ENCODE measurements at regions of chr10 and their contacts with region 1.

Region 1: GRCh38 chr10:102132563-102133372 is at the start of gene PPRC1:
- DNase-seq: peak; percentile 97 to 99 (median 97)
- H3K4me3 ChIP-seq: peak within 1 kb of the TSS; percentile 55 to 61
- H3K4me3 Mint-ChIP-seq: peak within 1 kb of the TSS; percentile 92 to 99 (median 96)
- H3K27ac ChIP-seq: peak within 1 kb of the TSS; percentile 88
- H3K27ac Mint-ChIP-seq: peak within 1 kb of the TSS; percentile 93 to 99 (median 96)
- H3K4me1 ChIP-seq: peaks cover 38% of the 10 kb centered on the region
- H3K4me1 Mint-ChIP-seq: peaks cover 27 to 50% (median 38%) of the 10 kb centered on the region in 4 donors
- H3K27me3 ChIP-seq: no peaks in the 10 kb centered on the region
- H3K27me3 Mint-ChIP-seq: no peaks in the 10 kb centered on the region
- total RNA-seq, gene PPRC1: 38.9 to 39.8 TPM

Region 2: GRCh38 chr10:102064868-102065560 is 67.8 kb before region 1 on chr10 and contains the start of gene HPS6:
- CTCF ChIA-PET with region 1: no interaction called
- POLR2A ChIA-PET with region 1: no interaction called
- intact Hi-C with region 1: loop called (anchors 1 kb)
- DNase-seq: peak; percentile 86 to 90 (median 88)
- H3K4me3 ChIP-seq: peak within 1 kb of the TSS; percentile 49 to 57
- H3K4me3 Mint-ChIP-seq: peak within 1 kb of the TSS; percentile 87 to 92 (median 88)
- H3K27ac ChIP-seq: peak within 1 kb of the TSS; percentile 90
- H3K27ac Mint-ChIP-seq: peak within 1 kb of the TSS; percentile 92 to 99 (median 96)
- H3K4me1 ChIP-seq: peaks cover 42% of the 10 kb centered on the region
- H3K4me1 Mint-ChIP-seq: peaks cover 19 to 39% (median 29%) of the 10 kb centered on the region in 4 donors
- H3K27me3 ChIP-seq: no peaks in the 10 kb centered on the region
- H3K27me3 Mint-ChIP-seq: no peaks in the 10 kb centered on the region
- total RNA-seq, gene HPS6: 25.1 to 27.9 TPM

Region 3: DNA sequence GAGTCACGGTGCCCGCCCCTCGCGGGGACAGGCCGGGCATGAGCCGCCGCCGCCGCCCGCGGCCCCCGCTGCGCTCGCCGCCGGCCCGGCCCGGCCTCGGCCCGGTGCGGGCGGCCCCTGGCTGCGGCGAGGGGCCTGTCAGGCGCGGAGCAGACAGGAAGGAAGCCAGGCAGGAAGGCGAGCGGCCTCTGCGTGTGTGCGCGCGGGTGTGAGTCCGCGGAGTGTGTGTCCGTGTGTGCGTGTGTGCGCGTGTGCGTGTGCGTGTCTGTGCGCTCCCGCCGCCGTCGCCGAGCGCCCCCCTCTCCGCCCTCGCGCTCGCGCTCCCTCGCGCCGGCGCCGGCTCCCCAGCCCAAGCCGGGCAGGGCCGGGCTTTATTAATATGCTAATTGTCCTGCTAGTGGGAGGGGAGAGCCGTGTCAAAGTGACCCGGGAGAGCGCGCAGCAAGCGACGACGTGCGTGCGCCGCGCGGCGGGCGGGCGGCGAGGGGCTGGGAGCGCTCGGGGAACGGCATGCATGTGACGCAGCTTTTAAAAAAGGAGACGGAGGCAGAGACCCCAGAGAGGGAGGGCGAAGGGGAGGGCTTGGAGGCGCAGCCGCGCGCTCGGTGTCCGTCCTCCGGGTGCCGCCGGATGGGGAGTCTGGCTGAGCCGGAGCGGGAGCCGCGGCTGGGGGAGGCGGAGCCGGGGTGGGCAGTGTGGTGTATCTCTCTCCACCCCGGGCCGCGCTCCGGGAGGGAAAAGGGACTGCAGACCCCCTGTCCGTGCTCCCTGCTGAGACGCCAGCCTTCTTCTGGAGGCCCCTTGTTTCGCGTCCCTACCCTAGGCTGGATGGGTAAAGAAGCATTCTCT is 12.4 kb before region 1 on chr10 and contains the start of gene LDB1:
- CTCF ChIA-PET with region 1: interaction called, 11 read pairs
- POLR2A ChIA-PET with region 1: interaction called, 24 read pairs
- intact Hi-C with region 1: loop called (anchors 1 kb)
- DNase-seq: peak; percentile 72 to 81 (median 77)
- H3K4me3 ChIP-seq: peak within 1 kb of the TSS; percentile 78 to 86
- H3K4me3 Mint-ChIP-seq: peak within 1 kb of the TSS; percentile 91 to 95 (median 94)
- H3K27ac ChIP-seq: peak within 1 kb of the TSS; percentile 90
- H3K27ac Mint-ChIP-seq: peak within 1 kb of the TSS; percentile 92 to 98 (median 96)
- H3K4me1 ChIP-seq: peaks cover 49% of the 10 kb centered on the region
- H3K4me1 Mint-ChIP-seq: peaks cover 33 to 70% (median 50%) of the 10 kb centered on the region in 4 donors
- H3K27me3 ChIP-seq: no peaks in the 10 kb centered on the region
- H3K27me3 Mint-ChIP-seq: no peaks in the 10 kb centered on the region
- total RNA-seq, gene LDB1: 131 to 135 TPM

Region 4: DNA sequence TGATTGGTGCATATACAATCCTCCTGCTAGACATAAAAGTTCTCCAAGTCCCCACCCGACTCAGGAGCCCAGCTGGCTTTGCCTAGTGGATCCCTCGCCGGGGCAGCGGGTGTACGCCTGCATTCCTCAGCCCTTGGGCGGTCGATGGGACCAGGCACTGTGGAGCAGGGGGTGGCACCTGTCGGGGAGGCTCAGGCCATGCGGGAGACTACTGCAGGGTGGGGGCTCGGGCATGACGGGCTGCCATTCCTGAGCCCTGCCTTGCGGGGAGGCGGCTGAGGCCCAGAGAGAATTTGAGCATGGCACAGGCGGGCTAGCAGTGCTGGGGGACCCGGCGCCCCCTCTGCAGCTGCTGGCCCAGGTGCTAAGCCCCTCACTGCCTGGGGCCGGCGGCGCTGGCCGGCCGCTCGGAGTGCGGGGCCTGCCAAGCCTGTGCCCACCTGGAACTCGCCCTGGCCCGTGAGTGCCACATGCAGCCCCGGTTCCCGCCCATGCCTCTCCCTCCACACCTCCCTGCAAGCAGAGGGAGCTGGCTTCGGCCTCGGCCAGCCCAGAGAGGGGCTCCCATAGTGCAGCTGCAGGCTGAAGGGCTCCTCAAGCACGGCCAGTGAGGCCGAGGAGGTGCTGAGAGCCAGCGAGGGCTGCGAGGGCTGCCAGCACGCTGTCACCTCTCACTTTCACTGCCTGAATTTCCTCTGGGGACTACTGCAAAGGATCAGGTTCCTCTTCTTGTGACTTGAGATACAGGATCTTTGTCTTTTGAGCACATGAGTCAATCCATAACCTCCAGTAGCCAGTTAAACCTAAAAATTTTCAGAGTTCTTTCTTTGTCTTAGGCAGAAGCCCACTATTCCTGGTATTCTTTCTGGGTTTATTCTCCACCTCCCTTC is 68.2 kb after region 1 on chr10:
- CTCF ChIA-PET with region 1: no interaction called
- POLR2A ChIA-PET with region 1: no interaction called
- intact Hi-C with region 1: no loop called
- DNase-seq: no peak
- H3K4me3 ChIP-seq: no peak overlapping the region
- H3K4me3 Mint-ChIP-seq: no peak overlapping the region
- H3K27ac ChIP-seq: no peak overlapping the region
- H3K27ac Mint-ChIP-seq: no peak overlapping the region
- H3K4me1 ChIP-seq: no peaks in the 10 kb centered on the region
- H3K4me1 Mint-ChIP-seq: no peaks in the 10 kb centered on the region
- H3K27me3 ChIP-seq: no peaks in the 10 kb centered on the region
- H3K27me3 Mint-ChIP-seq: peaks cover 0 to 7% of the 10 kb centered on the region in 2 donors

Region 5: DNA sequence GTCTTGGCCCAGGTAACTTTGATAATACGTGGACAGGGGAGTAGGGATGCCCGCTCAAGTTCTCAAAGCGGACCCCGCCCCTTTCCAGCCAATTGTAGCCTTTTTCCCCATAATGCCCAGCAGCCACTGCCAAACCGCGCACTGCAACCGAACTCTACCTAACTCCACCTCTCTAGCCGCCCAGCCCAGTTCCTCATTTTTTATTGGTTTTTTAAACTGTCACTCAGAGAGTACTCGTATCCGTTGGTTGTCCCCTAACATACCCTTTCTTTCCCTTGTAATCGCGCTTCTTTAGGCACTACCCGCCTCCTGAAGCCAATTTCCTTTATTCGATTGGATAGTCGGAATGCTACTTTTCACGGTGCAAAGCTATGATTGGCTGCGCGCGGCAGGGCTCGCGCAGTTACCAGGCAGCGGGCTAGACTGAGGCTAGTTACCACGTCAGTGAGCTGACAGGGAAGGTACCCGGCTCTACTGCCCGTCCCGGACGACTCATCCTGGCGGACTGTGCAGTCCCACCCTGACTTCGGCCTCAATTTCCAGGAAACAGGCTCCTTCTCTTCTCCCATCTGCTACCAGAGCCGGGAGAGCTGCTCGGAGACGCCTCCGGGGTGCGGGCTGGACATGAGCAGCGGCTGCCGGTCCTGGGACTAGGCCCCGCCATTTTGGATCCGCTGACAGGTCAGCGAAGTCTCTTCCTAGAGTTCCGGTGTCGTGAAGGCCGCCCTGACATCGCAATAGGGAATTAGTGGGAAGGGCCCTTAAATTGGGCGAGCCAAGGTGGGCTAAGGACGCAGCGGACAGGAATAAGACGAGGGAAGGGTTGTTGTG is 112.5 kb after region 1 on chr10 and contains the start of gene GBF1:
- CTCF ChIA-PET with region 1: no interaction called
- POLR2A ChIA-PET with region 1: no interaction called
- intact Hi-C with region 1: loop called (anchors 1 kb)
- DNase-seq: peak; percentile 95 to 98 (median 96)
- H3K4me3 ChIP-seq: peak within 1 kb of the TSS; percentile 51 to 94
- H3K4me3 Mint-ChIP-seq: peak within 1 kb of the TSS; percentile 84 to 99 (median 98)
- H3K27ac ChIP-seq: peak within 1 kb of the TSS; percentile 96
- H3K27ac Mint-ChIP-seq: peak within 1 kb of the TSS; percentile 89 to 98 (median 97)
- H3K4me1 ChIP-seq: peaks cover 64% of the 10 kb centered on the region
- H3K4me1 Mint-ChIP-seq: peaks cover 38 to 66% (median 50%) of the 10 kb centered on the region in 4 donors
- H3K27me3 ChIP-seq: peaks cover 6% of the 10 kb centered on the region
- H3K27me3 Mint-ChIP-seq: peaks cover 3 to 16% of the 10 kb centered on the region in 2 donors
- total RNA-seq, gene GBF1: 39.6 to 44.7 TPM